Mammary epithelial cell (primary cell): ENCODE measurements at regions of chr11 and their contacts with region 1.

Region 1: GRCh38 chr11:31932879-31933278 is 121.8 kb upstream of the PAX6 start:
- DNase-seq: no peak
- H3K4me3 ChIP-seq: no peak overlapping the region
- H3K27ac ChIP-seq: no peak overlapping the region
- H3K4me1 ChIP-seq: no peaks in the 10 kb centered on the region
- H3K27me3 ChIP-seq: no peaks in the 10 kb centered on the region
- CTCF ChIP-seq: no peak

Region 2: GRCh38 chr11:31844351-31844750 is 88.5 kb before region 1 on chr11:
- CTCF ChIA-PET with region 1: no interaction called
- dilution Hi-C with region 1: no loop called
- in situ Hi-C with region 1: no loop called
- intact Hi-C with region 1: no loop called
- DNase-seq: no peak
- H3K4me3 ChIP-seq: no peak overlapping the region
- H3K27ac ChIP-seq: no peak overlapping the region
- H3K4me1 ChIP-seq: no peaks in the 10 kb centered on the region
- H3K27me3 ChIP-seq: peaks cover 5% of the 10 kb centered on the region
- CTCF ChIP-seq: no peak

Region 3: DNA sequence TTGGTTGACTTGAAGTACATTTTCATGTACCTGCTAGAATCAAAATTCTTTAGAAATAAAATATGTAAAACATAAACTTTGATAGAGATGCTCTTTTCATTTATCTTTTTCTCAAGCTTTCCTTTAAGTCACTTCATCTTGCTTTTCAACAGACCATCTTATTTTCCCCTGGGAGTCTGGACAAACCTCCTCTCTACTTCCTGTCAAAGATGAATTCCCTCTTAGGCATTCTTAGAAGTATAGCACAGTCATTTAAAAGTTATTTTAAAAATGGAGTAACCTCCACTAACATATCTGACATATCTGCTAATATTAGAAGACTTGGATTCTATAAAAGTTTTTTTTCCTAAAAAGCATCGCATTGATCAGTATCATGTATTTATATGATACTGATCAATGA is 37.0 kb before region 1 on chr11:
- CTCF ChIA-PET with region 1: no interaction called
- dilution Hi-C with region 1: loop called (anchors 5 kb)
- in situ Hi-C with region 1: no loop called
- intact Hi-C with region 1: no loop called
- DNase-seq: no peak
- H3K4me3 ChIP-seq: no peak overlapping the region
- H3K27ac ChIP-seq: no peak overlapping the region
- H3K4me1 ChIP-seq: no peaks in the 10 kb centered on the region
- H3K27me3 ChIP-seq: no peaks in the 10 kb centered on the region
- CTCF ChIP-seq: no peak